A549 (cell line): ENCODE measurements at regions of chr3 and their contacts with region 1.

Region 1: GRCh38 chr3:115217678-115218451 is 70.8 kb upstream of the ZBTB20 start:
- DNase-seq: peak; percentile 22 to 77
- ATAC-seq: peak; percentile 88 to 93
- H3K4me3 ChIP-seq: no peak overlapping the region
- H3K27ac ChIP-seq: peak overlapping the region; percentile 44 to 65; a peak in 5 of 6 replicates
- H3K4me1 ChIP-seq: peaks cover 20% of the 10 kb centered on the region
- CTCF ChIP-seq: peak; percentile 89
- EP300 ChIP-seq: no peak
- POLR2A ChIP-seq: no peak
- RAD21 ChIP-seq: peak; percentile 93

Region 2: GRCh38 chr3:115436767-115437301 is 219.0 kb after region 1 on chr3:
- CTCF ChIA-PET with region 1: interaction called, 44 read pairs
- POLR2A ChIA-PET with region 1: no interaction called
- DNase-seq: peak; percentile 34 to 85
- ATAC-seq: peak; percentile 95 to 97
- H3K4me3 ChIP-seq: no peak overlapping the region
- H3K27ac ChIP-seq: peak overlapping the region; percentile 60 to 69; a peak in 4 of 6 replicates
- H3K4me1 ChIP-seq: peaks cover 11% of the 10 kb centered on the region
- CTCF ChIP-seq: peak; percentile 43
- EP300 ChIP-seq: peak in 1 of 2 experiments; percentile 27; a peak in 1 of 5 replicates
- POLR2A ChIP-seq: no peak
- RAD21 ChIP-seq: peak; percentile 51 to 66

Region 3: DNA sequence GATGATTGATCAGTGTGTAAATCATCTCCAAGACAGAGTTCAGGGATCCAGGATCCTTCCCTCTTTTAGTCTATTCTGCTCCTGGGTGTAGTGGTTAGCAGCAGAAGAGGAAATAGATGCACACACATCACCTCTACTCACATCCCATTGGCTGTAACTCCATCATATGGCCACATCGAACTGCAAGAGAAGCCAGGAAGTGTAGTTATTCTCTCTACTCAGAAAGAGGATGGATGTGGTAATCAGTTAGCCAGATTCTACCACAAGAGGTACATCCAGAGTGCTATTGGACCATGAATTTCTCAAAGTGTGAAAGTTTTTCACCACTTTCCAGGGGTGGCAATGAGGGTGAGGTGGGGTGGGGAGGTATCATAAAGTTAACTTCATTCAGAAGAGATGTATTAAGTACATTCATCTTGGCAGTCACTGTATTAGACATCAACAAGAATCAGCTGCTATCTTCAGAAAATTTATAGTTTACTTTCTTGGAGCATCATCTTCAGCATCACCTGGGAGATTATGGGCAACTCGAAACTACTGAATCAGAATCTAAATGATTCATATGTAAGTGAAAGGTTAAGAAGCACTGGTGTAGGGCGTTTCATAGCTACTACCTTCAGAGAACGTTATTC is 344.9 kb after region 1 on chr3:
- CTCF ChIA-PET with region 1: no interaction called
- POLR2A ChIA-PET with region 1: no interaction called
- DNase-seq: no peak
- ATAC-seq: no peak
- H3K4me3 ChIP-seq: no peak overlapping the region
- H3K27ac ChIP-seq: no peak overlapping the region
- H3K4me1 ChIP-seq: no peaks in the 10 kb centered on the region
- CTCF ChIP-seq: no peak
- EP300 ChIP-seq: no peak
- POLR2A ChIP-seq: no peak
- RAD21 ChIP-seq: no peak

Region 4: GRCh38 chr3:115671761-115672455 is 454.0 kb after region 1 on chr3:
- CTCF ChIA-PET with region 1: interaction called, 11 read pairs
- POLR2A ChIA-PET with region 1: no interaction called
- DNase-seq: no peak
- ATAC-seq: no peak
- H3K4me3 ChIP-seq: no peak overlapping the region
- H3K27ac ChIP-seq: no peak overlapping the region
- H3K4me1 ChIP-seq: no peaks in the 10 kb centered on the region
- CTCF ChIP-seq: no peak
- EP300 ChIP-seq: no peak
- POLR2A ChIP-seq: no peak
- RAD21 ChIP-seq: no peak

Region 5: DNA sequence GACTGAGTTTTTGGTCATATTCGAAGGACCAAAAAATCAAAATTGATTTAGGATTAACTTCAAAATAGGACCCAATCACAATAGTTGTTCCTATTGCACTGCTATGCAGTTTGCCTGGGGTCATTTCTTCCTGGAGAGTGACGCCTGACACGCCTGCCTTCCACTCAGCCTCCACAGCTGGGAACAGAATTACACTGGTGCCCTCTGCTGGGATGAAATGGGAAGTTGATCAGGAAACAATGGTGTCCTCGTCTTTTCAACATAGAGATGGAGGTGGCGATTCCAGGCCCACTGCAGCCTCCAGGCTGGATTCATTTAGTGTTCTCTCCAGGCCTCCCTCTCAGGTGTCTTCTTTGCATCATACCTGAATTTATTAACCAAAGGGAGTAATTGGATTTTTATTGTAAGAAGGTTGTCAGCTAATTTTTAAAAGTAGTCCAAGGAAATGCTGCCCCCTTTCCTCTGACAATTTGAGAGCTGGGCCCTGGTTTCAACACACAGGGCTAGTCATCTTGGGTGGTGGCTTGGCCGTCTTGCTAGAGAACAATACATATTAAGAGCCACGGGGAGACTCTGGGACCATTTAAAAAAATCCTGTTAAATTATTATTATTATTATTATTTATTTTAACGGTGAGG is 475.1 kb after region 1 on chr3:
- CTCF ChIA-PET with region 1: interaction called, 39 read pairs
- POLR2A ChIA-PET with region 1: interaction called, 3 read pairs
- DNase-seq: peak; percentile 65 to 77
- ATAC-seq: peak; percentile 99 to 100
- H3K4me3 ChIP-seq: no peak overlapping the region
- H3K27ac ChIP-seq: peak overlapping the region; percentile 30 to 42; a peak in 2 of 6 replicates
- H3K4me1 ChIP-seq: peaks cover 15% of the 10 kb centered on the region; the same call in 2 of the 3 replicates
- CTCF ChIP-seq: peak; percentile 92
- EP300 ChIP-seq: no peak
- POLR2A ChIP-seq: no peak
- RAD21 ChIP-seq: peak; percentile 97 to 98

Region 6: GRCh38 chr3:115783938-115784738 is 566.3 kb after region 1 on chr3:
- CTCF ChIA-PET with region 1: interaction called, 40 read pairs
- POLR2A ChIA-PET with region 1: interaction called, 3 read pairs
- DNase-seq: peak; percentile 90 to 94
- ATAC-seq: peak; percentile 94
- H3K4me3 ChIP-seq: peak overlapping the region; percentile 69
- H3K27ac ChIP-seq: peak overlapping the region; percentile 86 to 87
- H3K4me1 ChIP-seq: peaks cover 25% of the 10 kb centered on the region
- CTCF ChIP-seq: peak; percentile 85
- EP300 ChIP-seq: no peak
- POLR2A ChIP-seq: peak; percentile 36
- RAD21 ChIP-seq: peak; percentile 59 to 65

Region 7: GRCh38 chr3:115814778-115815380 is 597.0 kb after region 1 on chr3:
- CTCF ChIA-PET with region 1: interaction called, 12 read pairs
- POLR2A ChIA-PET with region 1: no interaction called
- DNase-seq: peak; percentile 68 to 71
- ATAC-seq: peak; percentile 95
- H3K4me3 ChIP-seq: no peak overlapping the region
- H3K27ac ChIP-seq: no peak overlapping the region; a peak in 1 of 6 replicates
- H3K4me1 ChIP-seq: peaks cover 7% of the 10 kb centered on the region; the same call in 1 of the 3 replicates
- CTCF ChIP-seq: peak; percentile 90
- EP300 ChIP-seq: no peak
- POLR2A ChIP-seq: no peak
- RAD21 ChIP-seq: peak; percentile 94